ENCODE measurements at regions of chr9 and their contacts with region 1.

Region 1: GRCh38 chr9:132800038-132800648 is 77.9 kb downstream of the AK8 start:
- DNase-seq: peak; percentile 57
- H3K4me3 ChIP-seq: no peak overlapping the region
- H3K27ac ChIP-seq: no peak overlapping the region
- H3K4me1 ChIP-seq: no peaks in the 10 kb centered on the region
- H3K27me3 ChIP-seq: peaks cover under 1 to 10% of the 10 kb centered on the region in 2 experiments
- CTCF ChIP-seq: peak; percentile 72 to 75
- POLR2A ChIP-seq: no peak

Region 2: DNA sequence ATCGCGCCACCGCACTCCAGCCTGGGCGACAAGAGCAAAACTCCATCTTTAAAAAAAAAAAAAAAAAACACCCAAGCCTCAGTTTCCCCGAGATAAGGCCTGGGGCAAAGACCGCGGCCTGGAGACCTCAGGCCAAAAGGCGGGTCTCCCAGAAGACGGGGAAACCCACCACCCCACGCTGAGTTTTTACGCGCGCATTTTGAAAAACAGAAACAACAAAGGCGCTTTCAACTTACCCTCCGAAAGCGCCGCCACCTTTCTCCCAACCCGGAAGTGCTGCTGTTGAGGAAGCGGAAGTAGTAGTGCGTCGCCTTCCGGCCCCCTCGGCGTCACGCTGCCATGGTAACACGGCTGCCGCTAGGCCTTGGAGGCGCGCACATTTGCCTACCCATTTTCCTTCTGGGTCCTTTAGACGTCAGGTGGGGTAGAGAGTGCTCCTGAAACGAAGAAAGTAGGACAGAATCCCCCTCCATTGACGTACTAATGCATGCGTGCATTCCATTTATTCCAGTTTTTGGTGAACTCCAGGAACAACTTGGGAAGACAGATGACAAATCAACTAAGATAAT is 393.5 kb before region 1 on chr9 and contains the start of gene TTF1:
- CTCF ChIA-PET with region 1: interaction called, 5 read pairs
- POLR2A ChIA-PET with region 1: no interaction called
- dilution Hi-C with region 1: no loop called
- intact Hi-C with region 1: loop called (anchors 1 kb)
- DNase-seq: peak; percentile 88
- H3K4me3 ChIP-seq: peak within 1 kb of the TSS; percentile 49 to 79 (median 58)
- H3K27ac ChIP-seq: peak within 1 kb of the TSS; percentile 61
- H3K4me1 ChIP-seq: peaks cover 20% of the 10 kb centered on the region
- H3K27me3 ChIP-seq: peaks cover 0 to 10% of the 10 kb centered on the region in 2 experiments
- CTCF ChIP-seq: no peak
- POLR2A ChIP-seq: peak; percentile 62
- total RNA-seq, gene TTF1: 12.0 and 13.8 TPM in 2 replicates

Region 3: DNA sequence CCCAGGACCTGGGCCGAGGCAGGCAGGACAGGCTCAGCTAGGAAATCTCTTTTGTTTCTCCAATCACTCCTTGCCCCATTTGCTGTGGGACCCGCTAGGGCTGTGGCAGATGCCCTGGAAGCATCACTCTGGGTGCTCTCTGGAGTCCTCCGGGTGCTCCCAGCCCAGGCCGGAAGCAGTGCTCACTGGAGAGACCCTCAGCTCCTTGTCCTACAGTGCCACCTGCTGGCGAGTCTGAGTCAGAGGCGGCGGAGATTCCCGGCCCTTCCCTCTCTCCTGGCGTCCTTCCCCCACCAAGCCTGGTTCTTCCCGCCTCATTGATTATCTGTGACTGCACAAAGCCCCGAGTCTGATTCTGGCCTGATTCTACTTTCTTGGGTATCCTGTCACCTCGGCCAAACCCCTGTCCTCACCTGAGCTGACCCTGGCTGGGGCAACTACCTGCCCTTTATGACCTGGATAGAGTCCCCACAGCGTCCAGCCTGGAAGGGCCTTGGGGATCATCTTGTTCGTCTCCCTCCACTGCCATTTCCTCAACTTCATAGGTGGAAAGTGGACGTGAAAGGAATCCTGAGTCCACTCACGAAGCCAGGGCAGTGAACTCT is 225.0 kb before region 1 on chr9:
- CTCF ChIA-PET with region 1: interaction called, 3 read pairs
- POLR2A ChIA-PET with region 1: no interaction called
- dilution Hi-C with region 1: no loop called
- intact Hi-C with region 1: loop called (anchors 2 kb)
- DNase-seq: peak; percentile 58
- H3K4me3 ChIP-seq: no peak overlapping the region
- H3K27ac ChIP-seq: no peak overlapping the region
- H3K4me1 ChIP-seq: no peaks in the 10 kb centered on the region
- H3K27me3 ChIP-seq: peaks cover 37 to 40% of the 10 kb centered on the region in 2 experiments
- CTCF ChIP-seq: peak; percentile 62 to 89
- POLR2A ChIP-seq: no peak

Region 4: DNA sequence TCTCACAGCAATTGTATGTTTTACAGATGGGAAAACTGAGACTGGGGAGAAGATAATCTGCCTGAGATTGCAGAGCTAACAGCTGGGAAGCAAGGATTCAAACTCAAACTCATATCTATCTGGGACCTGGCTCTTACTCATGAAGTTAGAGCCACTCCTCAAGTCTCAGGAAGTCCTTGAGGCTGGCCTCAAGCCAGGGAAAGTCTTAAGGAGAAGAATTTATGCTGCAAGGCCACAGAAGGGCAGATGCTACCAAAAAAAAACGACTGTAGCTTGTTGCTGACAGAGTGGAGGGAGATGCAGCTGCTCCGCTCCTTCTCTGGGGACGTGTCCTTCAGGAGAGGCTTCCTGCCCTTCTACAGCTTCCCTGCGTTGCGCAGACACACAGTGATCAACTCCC is 178.0 kb before region 1 on chr9:
- CTCF ChIA-PET with region 1: no interaction called
- POLR2A ChIA-PET with region 1: no interaction called
- dilution Hi-C with region 1: no loop called
- intact Hi-C with region 1: no loop called
- DNase-seq: no peak
- H3K4me3 ChIP-seq: no peak overlapping the region
- H3K27ac ChIP-seq: no peak overlapping the region
- H3K4me1 ChIP-seq: no peaks in the 10 kb centered on the region
- H3K27me3 ChIP-seq: no peaks in the 10 kb centered on the region
- CTCF ChIP-seq: no peak
- POLR2A ChIP-seq: no peak

Region 5: GRCh38 chr9:132768932-132769905 is 30.9 kb before region 1 on chr9:
- CTCF ChIA-PET with region 1: interaction called, 4 read pairs
- POLR2A ChIA-PET with region 1: no interaction called
- dilution Hi-C with region 1: no loop called
- intact Hi-C with region 1: loop called (anchors 1 kb)
- DNase-seq: peak; percentile 68
- H3K4me3 ChIP-seq: peak overlapping the region; percentile 83 to 95 (median 91)
- H3K27ac ChIP-seq: peak overlapping the region; percentile 61
- H3K4me1 ChIP-seq: peaks cover 3% of the 10 kb centered on the region
- H3K27me3 ChIP-seq: peaks cover 0 to 11% of the 10 kb centered on the region in 2 experiments
- CTCF ChIP-seq: peak; percentile 31 to 55
- POLR2A ChIP-seq: no peak

Region 6: DNA sequence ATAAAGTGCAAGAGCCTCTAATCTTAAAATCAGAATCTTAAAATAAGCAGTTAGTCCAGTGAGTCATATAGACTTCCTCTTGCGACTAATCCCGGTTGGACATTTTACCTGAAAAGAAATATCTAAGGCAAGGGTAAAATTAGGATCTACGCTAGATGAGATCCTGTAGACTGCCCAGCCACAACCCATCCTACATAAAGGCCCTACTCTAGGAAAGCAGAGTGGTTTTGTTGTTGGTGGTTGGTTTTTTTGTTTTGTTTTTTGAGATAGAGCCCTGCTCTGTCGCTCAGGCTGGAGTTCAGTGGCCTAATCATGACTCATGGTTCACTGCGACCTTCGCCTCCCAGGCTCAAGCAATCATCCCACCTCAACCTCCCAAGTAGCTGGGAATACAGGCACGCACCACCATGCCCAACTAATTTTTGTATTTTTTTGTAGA is 137.3 kb after region 1 on chr9:
- CTCF ChIA-PET with region 1: no interaction called
- POLR2A ChIA-PET with region 1: no interaction called
- dilution Hi-C with region 1: no loop called
- intact Hi-C with region 1: no loop called
- DNase-seq: peak; percentile 33
- H3K4me3 ChIP-seq: no peak overlapping the region
- H3K27ac ChIP-seq: peak overlapping the region; percentile 45
- H3K4me1 ChIP-seq: peaks cover 9% of the 10 kb centered on the region
- H3K27me3 ChIP-seq: no peaks in the 10 kb centered on the region
- CTCF ChIP-seq: no peak
- POLR2A ChIP-seq: no peak

Region 7: GRCh38 chr9:132973713-132974112 is 173.6 kb after region 1 on chr9:
- CTCF ChIA-PET with region 1: no interaction called
- POLR2A ChIA-PET with region 1: no interaction called
- dilution Hi-C with region 1: no loop called
- intact Hi-C with region 1: loop called (anchors 10 kb)
- DNase-seq: no peak
- H3K4me3 ChIP-seq: no peak overlapping the region
- H3K27ac ChIP-seq: no peak overlapping the region
- H3K4me1 ChIP-seq: no peaks in the 10 kb centered on the region
- H3K27me3 ChIP-seq: peaks cover 9 to 12% of the 10 kb centered on the region in 2 experiments
- CTCF ChIP-seq: no peak
- POLR2A ChIP-seq: no peak

Measured in endothelial cell of umbilical vein (primary cell).